ENCODE measurements at regions of chr1 and their contacts with region 1.

Region 1: GRCh38 chr1:228165372-228166169 is at the start of gene IBA57:
- DNase-seq: peak; percentile 100
- ATAC-seq: peak; percentile 86
- H3K4me3 ChIP-seq: peak within 1 kb of the TSS; percentile 77
- H3K27ac ChIP-seq: peak within 1 kb of the TSS; percentile 93
- H3K4me1 ChIP-seq: peaks cover 18% of the 10 kb centered on the region
- H3K27me3 ChIP-seq: no peaks in the 10 kb centered on the region
- CTCF ChIP-seq: peak; percentile 95
- total RNA-seq, gene IBA57: 13.3 and 18.3 TPM in 2 replicates

Region 2: GRCh38 chr1:227787513-227788270 is 377.9 kb before region 1 on chr1:
- CTCF ChIA-PET with region 1: no interaction called
- POLR2A ChIA-PET with region 1: no interaction called
- intact Hi-C with region 1: loop called (anchors 10 kb)
- DNase-seq: peak; percentile 100
- ATAC-seq: peak; percentile 84
- H3K4me3 ChIP-seq: peak overlapping the region; percentile 67
- H3K27ac ChIP-seq: no peak overlapping the region
- H3K4me1 ChIP-seq: peaks cover 18% of the 10 kb centered on the region
- H3K27me3 ChIP-seq: no peaks in the 10 kb centered on the region
- CTCF ChIP-seq: no peak

Region 3: DNA sequence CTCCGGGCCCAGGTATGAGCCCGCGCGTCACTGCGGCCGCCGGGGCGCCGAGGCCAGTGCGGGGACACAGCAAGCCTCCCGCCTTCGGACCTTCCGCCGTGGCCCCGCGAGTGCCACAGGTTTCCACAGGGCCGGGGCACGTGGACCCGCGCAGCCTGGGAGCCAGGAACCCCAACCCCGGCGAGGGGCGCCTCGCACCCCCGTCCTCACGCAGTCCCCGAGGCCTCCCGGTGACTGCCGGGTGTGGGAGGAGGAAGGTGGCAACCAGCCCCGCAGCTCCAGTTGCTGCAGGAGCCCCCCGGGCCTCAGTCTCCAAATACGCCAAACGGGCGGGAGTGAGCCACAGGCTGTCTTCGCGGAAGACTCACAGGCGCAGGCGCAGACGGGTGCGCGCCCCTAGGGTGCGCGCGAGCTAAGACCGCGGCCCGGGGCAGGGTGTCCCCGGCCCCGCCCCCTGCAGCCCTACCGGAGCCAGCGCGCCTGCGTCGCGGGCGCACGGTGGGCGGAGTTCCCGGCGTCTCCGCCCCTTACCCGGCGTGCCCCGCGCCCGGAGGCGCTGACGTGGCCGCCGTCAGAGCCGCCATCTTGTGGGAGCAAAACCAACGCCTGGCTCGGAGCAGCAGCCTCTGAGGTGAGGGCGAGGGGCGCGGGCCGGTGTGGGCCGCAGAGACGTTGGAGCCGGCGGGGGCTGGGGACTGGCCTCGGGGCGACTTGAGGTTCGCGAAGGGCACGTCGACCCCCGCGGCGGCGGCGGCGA is 83.3 kb before region 1 on chr1 and contains the start of gene ARF1:
- CTCF ChIA-PET with region 1: no interaction called
- POLR2A ChIA-PET with region 1: no interaction called
- intact Hi-C with region 1: loop called (anchors 1 kb)
- DNase-seq: peak; percentile 100
- ATAC-seq: peak; percentile 78
- H3K4me3 ChIP-seq: peak within 1 kb of the TSS; percentile 80
- H3K27ac ChIP-seq: peak within 1 kb of the TSS; percentile 33
- H3K4me1 ChIP-seq: peaks cover 37% of the 10 kb centered on the region
- H3K27me3 ChIP-seq: no peaks in the 10 kb centered on the region
- CTCF ChIP-seq: no peak
- total RNA-seq, gene ARF1: 685 and 688 TPM in 2 replicates

Region 4: DNA sequence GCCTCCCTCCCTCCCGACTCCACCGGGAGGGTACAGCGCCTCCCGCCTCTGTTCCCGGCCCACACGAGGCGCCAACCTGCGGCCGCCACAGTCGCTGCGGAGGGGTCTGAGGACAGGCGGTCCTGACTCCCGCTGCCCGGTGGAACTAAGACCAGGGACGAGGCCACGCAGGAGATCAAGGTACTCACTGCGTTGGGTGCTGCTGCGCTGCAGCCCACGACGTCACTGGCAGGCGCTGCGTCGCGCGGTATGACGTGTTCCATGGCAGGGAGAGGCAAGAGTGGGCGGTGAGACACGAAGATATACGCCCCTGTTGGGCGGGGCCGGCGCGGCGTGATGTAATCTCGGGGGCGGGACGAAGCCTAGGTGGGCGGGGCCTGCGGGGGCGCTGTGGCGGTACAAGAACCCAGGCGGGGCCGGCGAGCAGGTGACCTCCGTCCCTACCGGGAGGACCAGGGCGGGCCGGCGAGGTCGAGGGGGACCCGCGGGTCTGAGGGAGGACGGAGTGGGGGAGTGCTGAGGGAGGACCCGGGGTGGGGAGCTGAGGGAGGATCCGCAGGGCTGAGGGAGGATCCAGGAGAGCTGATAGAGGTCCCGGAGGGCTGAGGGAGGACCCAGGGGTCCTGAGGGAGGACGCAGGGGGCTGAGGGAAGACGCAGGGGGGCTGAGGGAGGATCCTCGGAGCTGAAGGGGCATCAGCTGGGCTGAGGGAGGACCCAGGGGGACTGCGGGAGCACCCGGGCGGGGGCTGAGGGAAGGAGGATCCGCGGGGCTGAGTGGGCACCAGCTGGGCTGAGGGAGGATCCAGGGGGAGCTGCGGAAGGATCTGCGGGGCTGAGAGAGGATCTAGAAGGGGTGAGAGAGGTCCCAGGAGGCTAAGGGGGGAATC is 56.3 kb before region 1 on chr1 and contains the start of gene MRPL55:
- CTCF ChIA-PET with region 1: no interaction called
- POLR2A ChIA-PET with region 1: no interaction called
- intact Hi-C with region 1: loop called (anchors 2 kb)
- DNase-seq: peak; percentile 100
- ATAC-seq: peak; percentile 86
- H3K4me3 ChIP-seq: peak within 1 kb of the TSS; percentile 87
- H3K27ac ChIP-seq: peak within 1 kb of the TSS; percentile 31
- H3K4me1 ChIP-seq: peaks cover 19% of the 10 kb centered on the region
- H3K27me3 ChIP-seq: no peaks in the 10 kb centered on the region
- CTCF ChIP-seq: peak; percentile 37; the same call in 1 of the 2 replicates
- total RNA-seq, gene MRPL55: 343 and 375 TPM in 2 replicates

Region 5: GRCh38 chr1:228139944-228140656 is 25.5 kb before region 1 on chr1 and contains the start of gene GUK1:
- CTCF ChIA-PET with region 1: interaction called, 4 read pairs
- POLR2A ChIA-PET with region 1: interaction called, 11 read pairs
- intact Hi-C with region 1: loop called (anchors 1 kb)
- DNase-seq: peak; percentile 100
- ATAC-seq: peak; percentile 91
- H3K4me3 ChIP-seq: peak within 1 kb of the TSS; percentile 84
- H3K27ac ChIP-seq: peak within 1 kb of the TSS; percentile 44
- H3K4me1 ChIP-seq: peaks cover 23% of the 10 kb centered on the region
- H3K27me3 ChIP-seq: no peaks in the 10 kb centered on the region
- CTCF ChIP-seq: peak; percentile 42
- total RNA-seq, gene GUK1: 996 and 1,117 TPM in 2 replicates

Region 6: DNA sequence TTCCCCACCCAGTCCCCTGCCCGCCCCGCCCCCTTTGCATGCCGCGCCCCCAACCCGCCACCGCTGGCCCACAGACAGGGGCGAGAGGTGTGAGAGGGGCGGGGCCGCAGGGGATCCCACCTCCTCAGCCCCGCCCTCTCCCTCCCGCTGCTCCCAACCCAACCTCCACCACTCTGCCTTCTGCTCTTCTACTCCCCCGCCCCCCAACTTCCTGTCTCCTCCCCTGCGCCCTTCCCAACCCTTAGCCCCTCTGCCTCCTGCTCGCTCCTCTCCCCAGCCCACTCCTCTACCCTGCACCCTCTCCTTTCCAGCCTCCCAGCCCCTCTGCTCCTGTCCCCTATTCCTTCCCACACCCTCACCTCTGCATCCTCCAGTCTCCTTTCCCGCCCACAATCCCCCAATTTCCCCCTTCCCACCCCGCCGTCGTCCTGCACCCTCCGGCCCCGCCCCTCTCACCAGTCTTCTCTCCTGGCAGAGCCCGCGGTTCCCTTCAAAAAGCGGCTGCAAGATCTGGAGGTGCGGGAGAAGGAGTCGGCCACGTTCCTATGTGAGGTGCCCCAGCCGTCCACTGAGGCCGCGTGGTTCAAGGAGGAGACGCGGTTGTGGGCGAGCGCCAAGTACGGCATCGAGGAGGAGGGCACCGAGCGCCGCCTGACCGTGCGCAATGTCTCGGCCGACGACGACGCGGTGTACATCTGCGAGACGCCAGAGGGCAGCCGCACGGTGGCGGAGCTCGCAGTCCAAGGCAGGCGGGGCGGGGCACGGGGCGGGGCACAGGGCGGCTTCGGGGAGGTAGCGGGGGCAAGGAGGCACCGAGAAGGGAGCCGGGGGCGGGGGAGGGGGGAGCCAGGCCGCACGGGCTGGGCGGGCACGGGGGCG is 47.6 kb after region 1 on chr1:
- CTCF ChIA-PET with region 1: no interaction called
- POLR2A ChIA-PET with region 1: no interaction called
- intact Hi-C with region 1: no loop called
- DNase-seq: peak; percentile 89
- ATAC-seq: peak; percentile 91
- H3K4me3 ChIP-seq: peak overlapping the region; percentile 78
- H3K27ac ChIP-seq: peak overlapping the region; percentile 31; the same call in 1 of the 2 replicates
- H3K4me1 ChIP-seq: no peaks in the 10 kb centered on the region
- H3K27me3 ChIP-seq: no peaks in the 10 kb centered on the region
- CTCF ChIP-seq: peak; percentile 64

Region 7: GRCh38 chr1:228457396-228458176 is 292.0 kb after region 1 on chr1:
- CTCF ChIA-PET with region 1: no interaction called
- POLR2A ChIA-PET with region 1: no interaction called
- intact Hi-C with region 1: loop called (anchors 5 kb)
- DNase-seq: peak; percentile 100
- ATAC-seq: peak; percentile 86
- H3K4me3 ChIP-seq: peak overlapping the region; percentile 87
- H3K27ac ChIP-seq: peak overlapping the region; percentile 64
- H3K4me1 ChIP-seq: peaks cover 15% of the 10 kb centered on the region; the same call in 1 of the 2 replicates
- H3K27me3 ChIP-seq: no peaks in the 10 kb centered on the region
- CTCF ChIP-seq: peak; percentile 56

Measured in PC-3 (cell line).